Activated CD4-positive, alpha-beta memory T cell treated with anti-CD3 and anti-CD28 coated beads for 36 hours (primary cell): ENCODE measurements at regions of chr11 and their contacts with region 1.

Region 1: GRCh38 chr11:123062158-123062891 is 389 bp upstream of the HSPA8 start:
- DNase-seq: peak; percentile 100
- H3K4me3 Mint-ChIP-seq: peak overlapping the region; percentile 99
- H3K27ac Mint-ChIP-seq: peak overlapping the region; percentile 100
- H3K4me1 Mint-ChIP-seq: peaks cover 47% of the 10 kb centered on the region
- H3K27me3 Mint-ChIP-seq: no peaks in the 10 kb centered on the region

Region 2: DNA sequence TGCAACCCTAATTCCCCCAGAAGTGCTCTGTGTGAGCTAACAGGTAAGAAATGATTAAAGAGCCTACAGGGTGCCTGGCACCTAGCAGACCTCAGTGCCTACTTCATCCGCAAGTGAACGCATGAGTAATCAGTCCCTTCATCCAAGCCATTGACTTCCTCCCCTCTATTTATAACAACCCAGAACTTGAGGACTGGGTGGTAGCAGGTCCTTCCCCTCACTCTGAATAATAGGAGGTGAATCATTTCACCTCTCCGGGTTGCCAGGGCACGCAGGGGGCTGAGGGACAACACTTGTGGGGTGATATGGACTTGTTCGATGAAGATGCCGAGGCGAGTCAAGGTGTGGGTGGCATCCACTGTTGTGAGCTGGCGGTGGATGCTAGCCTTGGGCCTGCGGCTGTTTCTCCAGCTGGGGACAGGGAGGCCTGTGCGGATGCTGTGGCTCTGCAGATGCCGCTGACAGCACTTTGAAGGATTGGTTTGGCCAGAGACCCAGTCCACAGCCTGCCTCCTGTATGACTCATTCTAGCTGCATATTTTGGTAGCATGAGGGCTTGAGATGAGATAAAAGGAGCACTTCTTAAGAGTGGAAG is 1597.9 kb before region 1 on chr11:
- CTCF ChIA-PET with region 1: no interaction called
- POLR2A ChIA-PET with region 1: no interaction called
- intact Hi-C with region 1: loop called (anchors 5 kb)
- DNase-seq: peak; percentile 94
- H3K4me3 Mint-ChIP-seq: peak overlapping the region; percentile 63
- H3K27ac Mint-ChIP-seq: peak overlapping the region; percentile 99
- H3K4me1 Mint-ChIP-seq: peaks cover 98% of the 10 kb centered on the region
- H3K27me3 Mint-ChIP-seq: no peaks in the 10 kb centered on the region

Region 3: GRCh38 chr11:122697636-122698167 is 364.6 kb before region 1 on chr11:
- CTCF ChIA-PET with region 1: no interaction called
- POLR2A ChIA-PET with region 1: interaction called, 4 read pairs
- intact Hi-C with region 1: loop called (anchors 5 kb)
- DNase-seq: peak; percentile 65
- H3K4me3 Mint-ChIP-seq: peak overlapping the region; percentile 57
- H3K27ac Mint-ChIP-seq: peak overlapping the region; percentile 75
- H3K4me1 Mint-ChIP-seq: peaks cover 80% of the 10 kb centered on the region
- H3K27me3 Mint-ChIP-seq: no peaks in the 10 kb centered on the region

Region 4: DNA sequence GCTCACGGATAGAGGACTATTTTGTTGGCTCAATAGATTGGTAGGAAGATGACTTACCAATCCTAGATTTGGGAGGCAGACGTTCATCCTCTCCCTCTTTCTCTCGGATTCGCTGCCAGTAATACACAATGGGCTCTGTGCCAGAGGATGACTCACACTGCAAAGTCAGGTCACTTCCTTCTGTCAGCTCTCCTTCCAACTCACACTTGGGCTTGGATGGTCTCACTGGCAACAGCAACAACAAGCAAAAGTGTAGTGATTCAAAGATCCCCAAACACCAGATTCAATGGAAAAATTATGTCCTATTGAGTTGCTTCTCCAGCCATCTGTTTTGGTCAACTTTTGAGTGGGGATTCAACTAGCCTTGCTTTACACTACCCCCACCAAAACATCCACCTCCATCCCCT is 21.3 kb after region 1 on chr11:
- CTCF ChIA-PET with region 1: interaction called, 7 read pairs
- POLR2A ChIA-PET with region 1: interaction called, 14 read pairs
- intact Hi-C with region 1: loop called (anchors 2 kb)
- DNase-seq: peak; percentile 91
- H3K4me3 Mint-ChIP-seq: peak overlapping the region; percentile 58
- H3K27ac Mint-ChIP-seq: peak overlapping the region; percentile 85
- H3K4me1 Mint-ChIP-seq: peaks cover 63% of the 10 kb centered on the region
- H3K27me3 Mint-ChIP-seq: no peaks in the 10 kb centered on the region

Region 5: DNA sequence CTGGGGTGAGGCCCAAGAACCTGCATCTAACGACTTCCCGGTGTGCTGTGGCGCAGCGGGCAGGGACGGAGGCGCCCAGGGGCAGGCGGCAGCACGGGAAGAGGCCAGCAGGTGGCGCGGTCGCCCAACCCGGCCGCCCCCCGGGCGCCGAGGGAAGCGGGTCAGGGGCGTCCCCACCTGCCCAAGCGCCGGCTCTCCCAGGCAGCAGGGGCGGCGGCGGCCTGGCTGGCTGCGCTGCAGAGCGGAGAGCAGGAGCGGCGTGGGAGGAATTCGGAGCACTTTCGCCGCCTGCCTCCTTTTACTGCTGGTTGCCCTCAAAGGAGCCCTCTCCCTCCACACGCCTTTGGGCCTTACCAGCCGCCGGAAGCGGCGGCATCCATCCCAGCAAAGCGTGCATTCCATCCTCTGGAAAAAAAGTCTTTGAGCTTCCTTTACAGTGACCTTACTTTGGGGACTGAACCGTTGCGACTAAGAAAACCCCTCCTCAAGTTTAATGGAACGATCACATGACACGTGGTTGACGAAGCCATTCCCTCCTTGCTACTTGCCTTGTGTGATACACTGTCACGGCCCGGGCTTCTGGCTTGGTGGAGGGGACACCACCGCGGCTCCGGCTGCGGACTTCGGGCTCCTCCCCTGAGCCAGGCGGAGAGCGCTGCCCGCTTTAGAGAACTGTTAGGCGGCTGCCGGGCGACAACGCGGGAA is 239.5 kb after region 1 on chr11:
- CTCF ChIA-PET with region 1: no interaction called
- POLR2A ChIA-PET with region 1: no interaction called
- intact Hi-C with region 1: loop called (anchors 1 kb)
- DNase-seq: peak; percentile 86
- H3K4me3 Mint-ChIP-seq: peak overlapping the region; percentile 53
- H3K27ac Mint-ChIP-seq: peak overlapping the region; percentile 84
- H3K4me1 Mint-ChIP-seq: peaks cover 41% of the 10 kb centered on the region
- H3K27me3 Mint-ChIP-seq: no peaks in the 10 kb centered on the region

Region 6: GRCh38 chr11:123381817-123382554 is 319.7 kb after region 1 on chr11:
- CTCF ChIA-PET with region 1: no interaction called
- POLR2A ChIA-PET with region 1: no interaction called
- intact Hi-C with region 1: loop called (anchors 1 kb)
- DNase-seq: peak; percentile 83
- H3K4me3 Mint-ChIP-seq: no peak overlapping the region
- H3K27ac Mint-ChIP-seq: no peak overlapping the region
- H3K4me1 Mint-ChIP-seq: peaks cover 22% of the 10 kb centered on the region
- H3K27me3 Mint-ChIP-seq: no peaks in the 10 kb centered on the region

Region 7: GRCh38 chr11:123454060-123454651 is 391.8 kb after region 1 on chr11:
- CTCF ChIA-PET with region 1: no interaction called
- POLR2A ChIA-PET with region 1: interaction called, 3 read pairs
- intact Hi-C with region 1: loop called (anchors 1 kb)
- DNase-seq: peak; percentile 92
- H3K4me3 Mint-ChIP-seq: peak overlapping the region; percentile 74
- H3K27ac Mint-ChIP-seq: peak overlapping the region; percentile 97
- H3K4me1 Mint-ChIP-seq: peaks cover 82% of the 10 kb centered on the region
- H3K27me3 Mint-ChIP-seq: no peaks in the 10 kb centered on the region

Region 8: GRCh38 chr11:123478352-123478987 is 416.1 kb after region 1 on chr11:
- CTCF ChIA-PET with region 1: no interaction called
- POLR2A ChIA-PET with region 1: no interaction called
- intact Hi-C with region 1: no loop called
- DNase-seq: peak; percentile 38
- H3K4me3 Mint-ChIP-seq: peak overlapping the region; percentile 27
- H3K27ac Mint-ChIP-seq: peak overlapping the region; percentile 56
- H3K4me1 Mint-ChIP-seq: peaks cover 43% of the 10 kb centered on the region
- H3K27me3 Mint-ChIP-seq: no peaks in the 10 kb centered on the region